ENCODE measurements at regions of chr19 and their contacts with region 1.

Region 1: GRCh38 chr19:15555759-15556633 is 47.7 kb downstream of the CYP4F22 start:
- DNase-seq: peak; percentile 65
- ATAC-seq: peak; percentile 95
- H3K4me3 ChIP-seq: peak overlapping the region; percentile 66; the same call in 1 of the 2 replicates
- H3K27ac ChIP-seq: no peak overlapping the region
- H3K4me1 ChIP-seq: peaks cover 5% of the 10 kb centered on the region
- H3K27me3 ChIP-seq: no peaks in the 10 kb centered on the region
- CTCF ChIP-seq: peak; percentile 82 to 96 (median 86)
- EP300 ChIP-seq: no peak
- POLR2A ChIP-seq: no peak
- RAD21 ChIP-seq: peak; percentile 89

Region 2: GRCh38 chr19:15091901-15092753 is 463.9 kb before region 1 on chr19:
- CTCF ChIA-PET with region 1: interaction called, 5 read pairs
- POLR2A ChIA-PET with region 1: no interaction called
- RAD21 ChIA-PET with region 1: interaction called, 4 read pairs
- SMC1A ChIA-PET with region 1: no interaction called
- in situ Hi-C with region 1: no loop called
- intact Hi-C with region 1: loop called (anchors 5 kb)
- DNase-seq: no peak
- ATAC-seq: peak; percentile 68
- H3K4me3 ChIP-seq: no peak overlapping the region
- H3K27ac ChIP-seq: no peak overlapping the region
- H3K4me1 ChIP-seq: no peaks in the 10 kb centered on the region
- H3K27me3 ChIP-seq: no peaks in the 10 kb centered on the region
- CTCF ChIP-seq: peak; percentile 54 to 62 (median 61)
- EP300 ChIP-seq: no peak
- POLR2A ChIP-seq: no peak
- RAD21 ChIP-seq: peak; percentile 71

Region 3: GRCh38 chr19:15177269-15178116 is 378.5 kb before region 1 on chr19:
- CTCF ChIA-PET with region 1: interaction called, 7 read pairs
- POLR2A ChIA-PET with region 1: no interaction called
- RAD21 ChIA-PET with region 1: interaction called, 3 read pairs
- SMC1A ChIA-PET with region 1: interaction called, 4 read pairs
- in situ Hi-C with region 1: loop called (anchors 5 kb)
- intact Hi-C with region 1: loop called (anchors 1 kb)
- DNase-seq: peak; percentile 4
- ATAC-seq: peak; percentile 99
- H3K4me3 ChIP-seq: no peak overlapping the region
- H3K27ac ChIP-seq: no peak overlapping the region
- H3K4me1 ChIP-seq: no peaks in the 10 kb centered on the region
- H3K27me3 ChIP-seq: no peaks in the 10 kb centered on the region
- CTCF ChIP-seq: peak; percentile 82 to 99 (median 87)
- EP300 ChIP-seq: no peak
- POLR2A ChIP-seq: no peak
- RAD21 ChIP-seq: peak; percentile 66

Region 4: DNA sequence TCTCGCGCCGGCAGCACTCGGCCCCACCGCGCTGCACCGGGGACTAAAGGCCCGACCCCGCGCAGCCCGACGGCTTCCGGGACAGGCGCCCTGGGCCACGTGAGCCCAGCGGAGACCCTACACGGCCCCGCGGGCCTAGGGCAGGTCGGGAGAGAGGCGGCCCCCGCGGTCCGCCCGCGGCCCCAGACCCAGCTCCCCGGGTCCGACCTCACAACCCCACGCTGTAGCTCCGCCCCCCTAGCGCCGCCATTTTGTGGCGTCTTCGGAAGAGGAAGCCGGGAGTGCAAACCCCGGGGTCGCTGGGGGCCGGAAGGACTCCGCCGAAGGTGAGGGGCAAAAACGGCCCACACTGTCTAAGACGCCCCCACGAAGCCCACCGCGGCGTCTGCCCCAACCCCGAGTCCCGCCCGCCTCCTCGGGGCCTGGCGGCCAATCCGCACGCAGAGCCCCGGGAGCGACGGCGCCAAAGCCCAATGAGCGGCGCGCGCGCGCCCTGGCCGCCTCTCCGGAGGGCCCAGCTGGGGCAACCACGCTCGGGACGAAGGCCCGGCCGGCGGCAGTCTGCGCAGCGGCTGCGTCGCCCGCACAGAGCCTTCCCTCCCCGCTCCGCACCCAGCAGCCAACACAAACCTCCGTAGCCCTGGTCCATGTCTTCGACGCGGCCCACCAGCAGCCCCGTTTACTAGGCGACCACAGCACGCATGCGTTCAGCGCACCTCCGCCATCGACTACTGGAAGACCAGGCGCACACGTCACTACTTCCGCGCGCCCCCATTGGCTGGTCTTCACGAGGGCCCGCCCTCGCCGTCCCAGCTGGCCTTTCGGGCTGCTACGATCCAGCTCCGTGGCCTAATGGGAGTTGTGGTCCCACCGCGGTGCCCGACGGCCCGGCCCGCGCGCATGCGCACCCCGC is 176.7 kb before region 1 on chr19 and contains the start of gene AKAP8:
- CTCF ChIA-PET with region 1: interaction called, 7 read pairs
- POLR2A ChIA-PET with region 1: no interaction called
- RAD21 ChIA-PET with region 1: interaction called, 7 read pairs
- SMC1A ChIA-PET with region 1: interaction called, 5 read pairs
- in situ Hi-C with region 1: no loop called
- intact Hi-C with region 1: loop called (anchors 2 kb)
- DNase-seq: peak; percentile 94
- ATAC-seq: peak; percentile 92
- H3K4me3 ChIP-seq: peak within 1 kb of the TSS; percentile 94
- H3K27ac ChIP-seq: peak within 1 kb of the TSS; percentile 91
- H3K4me1 ChIP-seq: peaks cover 23% of the 10 kb centered on the region
- H3K27me3 ChIP-seq: no peaks in the 10 kb centered on the region
- CTCF ChIP-seq: no peak
- EP300 ChIP-seq: no peak
- POLR2A ChIP-seq: peak; percentile 90
- RAD21 ChIP-seq: no peak
- polyA plus RNA-seq, gene AKAP8: 5.3 to 5.5 TPM

Region 5: DNA sequence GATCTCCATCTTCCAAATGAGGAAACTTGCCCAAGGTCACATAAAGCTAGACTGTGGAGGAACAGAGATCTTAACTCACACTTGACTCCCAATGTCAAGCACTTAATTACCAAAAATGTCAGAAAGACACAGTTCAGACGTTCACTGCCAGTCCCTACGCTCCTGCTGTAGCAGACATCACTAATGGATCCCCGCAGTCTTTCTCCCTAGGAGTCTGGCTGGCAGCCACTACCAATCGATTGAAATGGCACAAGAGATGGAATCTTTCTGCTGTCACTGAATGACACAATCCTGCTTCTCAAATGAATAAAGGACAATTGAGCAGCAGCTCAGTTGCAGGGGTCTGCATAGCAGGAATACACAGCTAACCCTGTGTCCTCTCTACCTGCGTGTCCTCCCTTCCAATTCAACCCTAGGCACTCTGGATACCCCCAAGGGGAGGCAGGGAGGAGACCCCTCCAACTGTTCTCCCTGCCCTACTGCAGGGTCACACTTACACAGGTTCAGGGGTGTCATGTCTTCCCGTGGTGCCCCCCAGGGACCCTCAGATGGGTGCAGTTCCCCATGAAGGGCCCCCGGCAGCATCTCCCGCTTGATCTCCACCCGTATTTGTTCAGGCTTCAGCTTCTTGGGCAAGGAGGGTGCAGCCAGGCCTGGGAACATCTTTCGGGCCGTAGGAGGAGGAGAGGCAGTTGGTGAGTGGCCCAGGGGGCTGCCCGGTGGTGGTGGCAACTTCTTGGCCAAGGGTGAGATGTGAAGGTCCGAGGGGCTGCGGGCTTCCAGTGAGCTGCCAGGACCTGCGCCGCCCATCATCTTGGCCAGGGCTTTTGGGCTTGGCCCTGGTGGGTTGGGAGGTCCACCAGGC is 129.3 kb before region 1 on chr19:
- CTCF ChIA-PET with region 1: interaction called, 85 read pairs
- POLR2A ChIA-PET with region 1: no interaction called
- RAD21 ChIA-PET with region 1: no interaction called
- SMC1A ChIA-PET with region 1: no interaction called
- in situ Hi-C with region 1: loop called (anchors 5 kb)
- intact Hi-C with region 1: loop called (anchors 5 kb)
- DNase-seq: no peak
- ATAC-seq: peak; percentile 22; the same call in 1 of the 3 replicates
- H3K4me3 ChIP-seq: no peak overlapping the region
- H3K27ac ChIP-seq: no peak overlapping the region
- H3K4me1 ChIP-seq: peaks cover 10% of the 10 kb centered on the region
- H3K27me3 ChIP-seq: no peaks in the 10 kb centered on the region
- CTCF ChIP-seq: no peak
- EP300 ChIP-seq: no peak
- POLR2A ChIP-seq: peak; percentile 9; the same call in 1 of the 2 replicates
- RAD21 ChIP-seq: no peak

Region 6: GRCh38 chr19:15466851-15467733 is 88.9 kb before region 1 on chr19:
- CTCF ChIA-PET with region 1: interaction called, 6 read pairs
- POLR2A ChIA-PET with region 1: interaction called, 3 read pairs
- RAD21 ChIA-PET with region 1: interaction called, 4 read pairs
- SMC1A ChIA-PET with region 1: interaction called, 3 read pairs
- in situ Hi-C with region 1: no loop called
- intact Hi-C with region 1: loop called (anchors 5 kb)
- DNase-seq: peak; percentile 97
- ATAC-seq: peak; percentile 71
- H3K4me3 ChIP-seq: peak overlapping the region; percentile 17; the same call in 1 of the 2 replicates
- H3K27ac ChIP-seq: peak overlapping the region; percentile 80
- H3K4me1 ChIP-seq: peaks cover 22% of the 10 kb centered on the region
- H3K27me3 ChIP-seq: no peaks in the 10 kb centered on the region
- CTCF ChIP-seq: no peak
- EP300 ChIP-seq: peak in 1 of 2 experiments; percentile 25; a peak in 1 of 4 replicates
- POLR2A ChIP-seq: no peak
- RAD21 ChIP-seq: no peak

Region 7: DNA sequence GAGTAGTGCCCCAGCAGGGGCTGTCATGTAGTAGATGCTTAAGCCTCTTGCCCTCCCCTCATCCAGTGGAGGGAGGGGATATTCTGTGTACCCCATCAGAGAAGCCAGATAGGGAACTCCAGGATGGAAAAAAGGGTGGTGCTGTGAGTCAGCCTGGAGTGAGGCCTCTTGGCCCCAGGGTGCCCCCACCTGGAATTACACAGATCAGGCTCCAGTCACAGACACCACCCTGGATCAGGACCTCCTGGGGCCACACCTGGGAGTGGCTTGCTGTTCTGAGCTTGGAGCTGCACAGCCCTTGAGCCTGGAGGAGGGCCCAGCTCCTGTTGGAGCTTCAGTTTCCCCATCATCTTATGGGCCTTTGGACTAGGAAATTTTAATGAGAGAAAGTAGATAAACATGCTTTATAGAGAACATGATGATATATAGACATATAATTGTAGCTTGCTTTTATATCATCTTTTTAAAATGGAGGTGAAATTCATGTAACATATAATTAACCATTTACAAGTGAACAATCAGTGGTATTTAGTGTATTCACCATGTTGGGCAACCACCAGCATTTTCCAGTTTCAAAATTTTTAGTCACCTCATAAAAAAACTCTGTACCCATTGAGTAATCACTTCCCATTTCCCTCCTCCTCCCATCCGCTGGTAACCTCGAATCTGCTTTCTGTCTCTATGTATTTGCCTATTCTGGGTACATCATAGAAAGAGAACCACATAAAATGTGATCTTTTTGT is 23.0 kb before region 1 on chr19:
- CTCF ChIA-PET with region 1: no interaction called
- POLR2A ChIA-PET with region 1: no interaction called
- RAD21 ChIA-PET with region 1: no interaction called
- SMC1A ChIA-PET with region 1: no interaction called
- in situ Hi-C with region 1: no loop called
- intact Hi-C with region 1: no loop called
- DNase-seq: peak; percentile 25
- ATAC-seq: no peak
- H3K4me3 ChIP-seq: no peak overlapping the region
- H3K27ac ChIP-seq: no peak overlapping the region
- H3K4me1 ChIP-seq: no peaks in the 10 kb centered on the region
- H3K27me3 ChIP-seq: no peaks in the 10 kb centered on the region; a peak in 1 of 4 replicates
- CTCF ChIP-seq: no peak
- EP300 ChIP-seq: no peak
- POLR2A ChIP-seq: no peak
- RAD21 ChIP-seq: no peak

Measured in GM12878 (cell line).